Activated CD8-positive, alpha-beta T cell treated with anti-CD3 and anti-CD28 coated beads, Interleukin-2, amount 10 ng/mL, durations not matched to agents 7 days and 5 days (primary cell): ENCODE measurements at regions of chr2 and their contacts with region 1.

Region 1: DNA sequence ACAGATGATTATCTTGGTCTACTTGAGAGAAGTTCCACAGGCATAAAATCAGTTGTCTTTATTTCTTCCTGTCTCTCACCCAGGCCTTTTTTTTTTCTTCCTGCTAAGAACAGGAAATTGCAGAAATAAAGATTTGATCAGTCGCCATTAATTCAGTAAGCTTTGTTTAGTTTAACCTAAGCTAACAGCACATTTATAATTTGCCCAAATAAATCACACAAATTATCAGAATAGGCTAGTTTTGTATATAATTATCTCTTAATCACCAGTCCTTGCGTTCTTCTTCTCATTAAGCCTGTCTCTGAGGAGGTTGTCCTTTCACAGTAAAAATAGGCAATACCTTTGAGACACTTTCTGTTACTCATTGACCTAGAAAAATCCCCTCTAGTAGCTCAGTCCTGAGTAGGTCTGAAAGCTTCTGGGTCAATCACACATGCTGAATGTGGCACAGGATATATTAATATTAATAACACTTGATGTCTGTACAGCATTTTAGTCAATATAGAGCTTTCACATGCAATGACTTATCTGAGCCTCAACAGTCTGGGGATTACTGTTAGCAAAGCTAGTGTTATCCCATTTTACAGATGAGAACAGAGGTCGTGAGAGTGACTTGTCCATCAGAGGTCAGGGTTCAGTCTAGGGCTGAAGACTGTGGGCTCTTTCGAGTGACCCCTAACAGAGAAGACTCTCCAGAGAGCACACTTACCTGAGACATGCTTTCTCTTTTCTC is 11.2 kb upstream of the STK17B start:
- DNase-seq: no peak
- ATAC-seq: peak; percentile 13
- H3K4me3 Mint-ChIP-seq: peak overlapping the region; percentile 62
- H3K27ac Mint-ChIP-seq: peak overlapping the region; percentile 95
- H3K4me1 Mint-ChIP-seq: peaks cover 89% of the 10 kb centered on the region
- H3K27me3 Mint-ChIP-seq: no peaks in the 10 kb centered on the region

Region 2: DNA sequence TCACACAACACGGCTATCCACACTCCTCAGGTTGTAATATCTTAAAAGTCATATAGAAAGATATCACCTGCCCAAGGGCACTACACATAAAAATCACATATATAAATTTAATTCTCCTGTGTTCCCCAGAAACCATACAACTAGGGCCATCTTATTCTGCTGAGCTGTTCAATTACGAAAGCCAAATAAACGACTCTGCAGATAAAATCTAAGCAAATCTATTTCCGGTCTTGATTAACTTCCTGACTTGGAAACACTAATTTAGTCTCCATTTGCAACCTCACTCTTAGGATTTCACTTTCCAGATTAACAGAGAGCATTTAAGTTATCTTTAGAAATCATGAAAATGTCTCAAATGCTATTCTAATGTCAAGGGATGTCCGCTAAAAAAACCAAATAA is 12.7 kb after region 1 on chr2:
- CTCF ChIA-PET with region 1: interaction called, 5 read pairs
- POLR2A ChIA-PET with region 1: interaction called, 10 read pairs
- DNase-seq: no peak
- ATAC-seq: peak; percentile 8
- H3K4me3 Mint-ChIP-seq: peak overlapping the region; percentile 42
- H3K27ac Mint-ChIP-seq: no peak overlapping the region
- H3K4me1 Mint-ChIP-seq: peaks cover 48% of the 10 kb centered on the region
- H3K27me3 Mint-ChIP-seq: no peaks in the 10 kb centered on the region